ENCODE measurements at regions of chr9 and their contacts with region 1.

Region 1: GRCh38 chr9:98010445-98010844 is 27.3 kb downstream of the ANP32B start:
- DNase-seq: no peak
- ATAC-seq: peak; percentile 96
- H3K4me3 Mint-ChIP-seq: no peak overlapping the region
- H3K27ac Mint-ChIP-seq: peak overlapping the region; percentile 24
- H3K4me1 Mint-ChIP-seq: peaks cover 21% of the 10 kb centered on the region
- H3K27me3 Mint-ChIP-seq: no peaks in the 10 kb centered on the region
- CTCF ChIP-seq: no peak

Region 2: DNA sequence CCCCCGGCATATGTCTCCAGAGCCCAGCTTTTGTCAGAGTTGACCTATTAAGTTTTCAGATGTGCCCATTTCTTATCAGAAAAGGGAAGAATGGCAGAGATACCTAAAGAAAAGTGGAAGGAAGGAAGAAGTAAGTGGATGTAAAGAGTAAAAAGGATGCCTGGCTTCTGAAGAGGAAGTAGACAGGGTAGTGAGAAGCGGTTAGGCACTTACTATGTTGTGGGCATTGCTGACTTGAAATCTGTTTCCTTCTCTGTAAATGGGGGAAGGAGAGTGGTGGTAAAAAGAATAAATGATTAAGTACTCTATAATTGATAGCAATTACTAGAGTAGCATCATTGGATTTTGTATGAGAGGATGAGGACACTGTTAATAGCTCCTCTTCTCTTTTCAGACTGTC is 17.4 kb before region 1 on chr9:
- CTCF ChIA-PET with region 1: interaction called, 4 read pairs
- POLR2A ChIA-PET with region 1: interaction called, 4 read pairs
- intact Hi-C with region 1: loop called (anchors 2 kb)
- DNase-seq: no peak
- ATAC-seq: peak; percentile 73
- H3K4me3 Mint-ChIP-seq: peak overlapping the region; percentile 24
- H3K27ac Mint-ChIP-seq: peak overlapping the region; percentile 63
- H3K4me1 Mint-ChIP-seq: peaks cover 70% of the 10 kb centered on the region
- H3K27me3 Mint-ChIP-seq: no peaks in the 10 kb centered on the region
- CTCF ChIP-seq: no peak

Measured in activated B cell treated with CpG ODN at 0.5 μM for 24 hours (primary cell).